ENCODE measurements at regions of chr15 and their contacts with region 1.

Region 1: DNA sequence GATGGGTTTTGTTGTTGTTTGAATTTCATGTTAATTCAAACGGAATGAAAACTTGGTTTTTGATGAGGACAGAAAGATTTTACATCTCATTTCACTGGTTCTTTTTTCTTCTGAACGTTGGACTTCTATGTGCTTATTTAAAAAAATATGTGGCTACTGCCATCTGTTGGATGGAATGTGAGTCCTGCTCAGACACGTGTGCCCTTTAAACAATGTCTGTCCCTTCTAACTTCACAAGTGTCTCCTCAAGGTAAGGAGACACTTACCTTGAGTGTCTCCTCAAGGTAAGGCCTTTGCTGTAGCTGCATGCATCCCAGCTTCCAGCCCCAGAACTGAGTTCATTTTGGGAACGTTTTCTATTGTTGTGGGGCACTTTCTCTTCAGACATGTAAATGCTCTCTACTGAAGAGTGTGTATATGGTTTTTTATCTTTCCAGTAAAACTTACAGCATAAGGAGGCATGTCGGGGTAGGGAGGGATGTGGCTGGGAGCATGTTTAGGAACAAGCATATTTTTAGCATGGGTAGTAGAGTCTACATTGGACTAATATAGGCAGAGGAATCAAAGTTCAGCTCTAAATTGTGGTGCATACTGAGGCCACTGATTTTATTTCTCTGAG is 63.1 kb upstream of the UBE3A start:
- DNase-seq: no peak
- H3K4me3 Mint-ChIP-seq: no peak overlapping the region
- H3K27ac Mint-ChIP-seq: no peak overlapping the region
- H3K4me1 Mint-ChIP-seq: no peaks in the 10 kb centered on the region
- H3K27me3 Mint-ChIP-seq: no peaks in the 10 kb centered on the region

Region 2: DNA sequence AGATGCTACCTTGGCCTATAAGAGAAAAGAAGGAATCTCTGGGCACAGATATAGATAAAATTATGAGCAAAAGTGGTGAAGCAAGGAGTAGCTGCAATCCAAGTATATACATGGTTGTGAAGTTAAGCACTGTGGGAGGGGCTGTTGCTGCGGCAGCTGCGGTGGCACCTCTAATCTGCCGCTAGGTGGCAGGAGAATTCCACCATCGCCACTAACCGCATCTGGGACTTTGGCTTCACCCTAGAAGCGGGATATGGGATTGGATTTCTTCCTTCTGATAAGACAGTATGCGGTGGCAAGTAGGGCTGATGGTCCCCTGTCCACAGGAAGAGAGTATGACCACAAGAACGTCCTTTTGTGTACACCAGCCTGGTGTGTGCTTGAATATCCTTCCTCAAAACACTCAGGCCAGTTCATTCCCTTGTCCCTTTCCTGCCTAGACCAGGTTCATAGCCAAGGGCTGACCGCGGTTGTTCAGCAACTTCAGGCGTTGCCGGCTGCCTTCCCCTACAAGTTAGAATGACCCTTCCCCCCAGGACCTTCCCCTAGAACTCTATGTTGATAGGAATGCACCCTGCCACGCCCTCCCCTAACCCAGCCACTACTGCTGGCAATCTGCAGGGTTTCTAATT is 1859.4 kb before region 1 on chr15:
- intact Hi-C with region 1: loop called (anchors 5 kb)
- DNase-seq: no peak
- H3K4me3 Mint-ChIP-seq: no peak overlapping the region
- H3K27ac Mint-ChIP-seq: no peak overlapping the region
- H3K4me1 Mint-ChIP-seq: no peaks in the 10 kb centered on the region
- H3K27me3 Mint-ChIP-seq: no peaks in the 10 kb centered on the region